Colonic mucosa (tissue), 4 donors: ENCODE measurements at regions of chr17 and their contacts with region 1.

Region 1: GRCh38 chr17:48081858-48082257 is 19.4 kb downstream of the CBX1 start:
- DNase-seq: no peak
- H3K4me3 ChIP-seq: no peak overlapping the region
- H3K27ac ChIP-seq: no peak overlapping the region
- H3K4me1 ChIP-seq: no peaks in the 10 kb centered on the region
- H3K27me3 ChIP-seq: no peaks in the 10 kb centered on the region
- CTCF ChIP-seq: no peak

Region 2: DNA sequence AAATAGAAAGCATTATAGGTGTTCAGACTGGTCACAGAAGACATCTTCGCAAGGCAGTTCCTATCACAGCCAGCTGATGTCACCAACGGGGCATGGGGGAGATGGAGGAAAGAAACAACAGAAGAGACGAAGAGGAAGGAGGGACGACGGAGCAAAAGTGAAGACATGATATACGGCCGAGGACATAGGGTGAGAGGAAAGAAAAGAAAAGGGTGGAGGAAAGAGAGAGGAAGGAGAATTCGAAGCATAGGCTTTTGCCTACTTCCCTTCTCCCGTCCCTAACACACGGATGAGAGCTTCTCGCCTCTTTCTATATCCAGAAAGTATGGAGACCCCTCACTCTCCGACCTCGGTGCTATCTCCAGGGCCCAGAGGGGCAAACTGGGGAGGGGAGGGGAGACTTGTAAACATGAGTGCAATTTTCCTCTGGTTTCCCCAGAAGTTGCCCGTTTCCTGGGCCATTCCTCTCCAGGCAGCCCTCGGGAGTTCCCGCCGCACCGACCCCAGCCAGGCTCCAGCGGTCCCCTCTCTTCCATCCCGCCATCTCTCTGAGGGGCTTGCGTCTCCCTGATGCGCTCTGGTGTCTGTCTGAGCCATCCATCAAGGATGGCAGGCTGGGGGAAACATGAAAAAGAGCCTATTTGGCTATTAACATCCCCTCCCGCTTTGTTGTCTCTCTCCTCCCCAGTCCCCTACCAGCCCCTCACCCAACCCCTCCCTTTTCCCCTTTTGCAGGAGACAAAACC is 70.3 kb before region 1 on chr17:
- intact Hi-C with region 1: no loop called
- DNase-seq: no peak
- H3K4me3 ChIP-seq: peak overlapping the region; percentile 21
- H3K27ac ChIP-seq: no peak overlapping the region
- H3K4me1 ChIP-seq: peaks cover 5% of the 10 kb centered on the region
- H3K27me3 ChIP-seq: peaks cover 15% of the 10 kb centered on the region
- CTCF ChIP-seq: peak; percentile 27

Region 3: GRCh38 chr17:48055442-48056237 is 26.2 kb before region 1 on chr17:
- intact Hi-C with region 1: no loop called
- DNase-seq: no peak
- H3K4me3 ChIP-seq: no peak overlapping the region
- H3K27ac ChIP-seq: no peak overlapping the region
- H3K4me1 ChIP-seq: peaks cover 44% of the 10 kb centered on the region
- H3K27me3 ChIP-seq: no peaks in the 10 kb centered on the region
- CTCF ChIP-seq: no peak

Region 4: GRCh38 chr17:48131216-48131824 is 49.5 kb after region 1 on chr17:
- intact Hi-C with region 1: loop called (anchors 2 kb)
- DNase-seq: peak; percentile 77
- H3K4me3 ChIP-seq: no peak overlapping the region
- H3K27ac ChIP-seq: no peak overlapping the region
- H3K4me1 ChIP-seq: no peaks in the 10 kb centered on the region
- H3K27me3 ChIP-seq: no peaks in the 10 kb centered on the region
- CTCF ChIP-seq: peak; percentile 87

Region 5: GRCh38 chr17:48841395-48841831 is 759.6 kb after region 1 on chr17:
- intact Hi-C with region 1: no loop called
- DNase-seq: no peak
- H3K4me3 ChIP-seq: no peak overlapping the region
- H3K27ac ChIP-seq: peak overlapping the region; percentile 69
- H3K4me1 ChIP-seq: peaks cover 35% of the 10 kb centered on the region
- H3K27me3 ChIP-seq: no peaks in the 10 kb centered on the region
- CTCF ChIP-seq: no peak